ENCODE measurements at regions of chr22 and their contacts with region 1.

Region 1: GRCh38 chr22:40533712-40534378 is 102.7 kb downstream of the MRTFA start:
- DNase-seq: peak; percentile 47 to 70
- ATAC-seq: peak; percentile 67 to 72; a peak in 5 of 6 replicates
- H3K4me3 ChIP-seq: peak overlapping the region; percentile 45
- H3K27ac ChIP-seq: peak overlapping the region; percentile 81 to 85
- H3K4me1 ChIP-seq: peaks cover 47% of the 10 kb centered on the region
- CTCF ChIP-seq: no peak
- EP300 ChIP-seq: no peak
- POLR2A ChIP-seq: no peak
- RAD21 ChIP-seq: no peak

Region 2: DNA sequence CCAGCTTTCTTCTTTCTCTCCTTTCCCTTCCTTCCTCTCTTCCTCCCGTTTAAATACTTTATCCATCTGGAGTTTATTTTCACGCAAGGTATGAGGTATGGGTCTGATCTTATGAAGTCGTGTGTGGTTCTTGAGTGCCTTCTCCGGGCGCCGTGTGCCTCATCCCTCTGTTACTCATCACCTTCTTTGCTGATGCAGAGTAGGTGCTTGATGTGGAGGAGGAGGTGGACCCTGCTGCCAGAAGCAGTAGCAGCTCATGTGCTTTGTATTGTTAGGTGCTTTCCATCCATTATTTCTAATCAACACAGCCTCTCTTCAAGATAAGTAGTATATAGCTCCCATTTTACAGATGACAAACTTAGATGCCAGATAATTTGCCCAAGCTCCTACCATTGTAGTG is 309.1 kb before region 1 on chr22:
- CTCF ChIA-PET with region 1: no interaction called
- POLR2A ChIA-PET with region 1: no interaction called
- DNase-seq: no peak
- ATAC-seq: no peak
- H3K4me3 ChIP-seq: no peak overlapping the region
- H3K27ac ChIP-seq: no peak overlapping the region
- H3K4me1 ChIP-seq: peaks cover 9% of the 10 kb centered on the region; the same call in 1 of the 3 replicates
- CTCF ChIP-seq: no peak
- EP300 ChIP-seq: no peak
- POLR2A ChIP-seq: no peak
- RAD21 ChIP-seq: no peak

Region 3: GRCh38 chr22:40599731-40600130 is 65.9 kb after region 1 on chr22:
- CTCF ChIA-PET with region 1: no interaction called
- POLR2A ChIA-PET with region 1: interaction called, 11 read pairs
- DNase-seq: no peak
- ATAC-seq: no peak
- H3K4me3 ChIP-seq: no peak overlapping the region
- H3K27ac ChIP-seq: 0 out of 6 replicates have a peak overlapping the region, but pooled peaks of 1 of the 2 experiments have one; percentile 34
- H3K4me1 ChIP-seq: peaks cover 91% of the 10 kb centered on the region
- CTCF ChIP-seq: no peak
- EP300 ChIP-seq: no peak
- POLR2A ChIP-seq: no peak
- RAD21 ChIP-seq: no peak

Region 4: DNA sequence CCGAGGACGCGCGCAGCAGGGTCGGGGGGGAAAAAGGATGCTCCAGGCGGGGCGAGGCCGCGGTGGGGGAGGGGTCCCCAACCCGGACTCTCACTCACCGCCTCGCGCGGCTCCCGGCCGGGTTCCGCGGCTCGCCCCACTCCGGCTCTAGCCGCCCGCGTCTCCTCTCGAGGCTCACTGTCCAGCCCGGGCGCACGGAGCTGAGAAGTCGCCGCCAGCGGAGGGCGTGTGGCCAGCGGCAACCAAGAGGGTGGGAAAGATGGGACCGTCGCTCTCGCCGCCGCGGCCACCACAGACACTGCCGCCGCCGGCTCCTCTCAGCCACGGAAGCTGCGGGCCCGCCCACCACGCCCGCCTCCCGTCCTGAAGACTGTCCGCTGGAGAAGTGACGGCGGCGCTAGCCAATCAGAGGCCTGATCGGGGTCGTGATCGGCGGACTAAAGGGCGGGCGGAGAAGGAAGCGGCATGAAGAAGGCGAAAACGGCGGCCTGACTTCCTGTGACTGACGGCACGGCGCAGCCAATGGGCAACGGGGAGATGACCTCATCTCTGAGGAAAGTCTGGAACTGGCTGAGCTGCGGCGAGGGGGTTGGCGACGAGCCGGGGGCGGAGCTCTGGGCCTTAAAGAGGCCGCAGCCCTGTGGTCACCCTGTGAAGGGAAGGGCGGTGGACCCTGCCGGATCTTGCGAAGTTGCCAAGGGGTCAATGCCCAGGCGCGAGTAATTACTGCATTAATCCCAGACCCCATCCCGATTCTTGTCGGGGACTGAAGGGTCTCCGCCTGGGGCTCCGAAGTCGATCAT is 102.7 kb after region 1 on chr22 and contains the start of gene MRTFA:
- CTCF ChIA-PET with region 1: interaction called, 7 read pairs
- POLR2A ChIA-PET with region 1: interaction called, 10 read pairs
- DNase-seq: peak; percentile 76 to 99
- ATAC-seq: peak; percentile 97 to 98
- H3K4me3 ChIP-seq: peak within 1 kb of the TSS; percentile 98
- H3K27ac ChIP-seq: peak within 1 kb of the TSS; percentile 94 to 97
- H3K4me1 ChIP-seq: peaks cover 47% of the 10 kb centered on the region
- CTCF ChIP-seq: no peak
- EP300 ChIP-seq: no peak
- POLR2A ChIP-seq: peak; percentile 78
- RAD21 ChIP-seq: no peak; a peak in 1 of 5 replicates
- polyA plus RNA-seq, gene MRTFA: 6.8 and 12.8 TPM in 2 replicates

Region 5: DNA sequence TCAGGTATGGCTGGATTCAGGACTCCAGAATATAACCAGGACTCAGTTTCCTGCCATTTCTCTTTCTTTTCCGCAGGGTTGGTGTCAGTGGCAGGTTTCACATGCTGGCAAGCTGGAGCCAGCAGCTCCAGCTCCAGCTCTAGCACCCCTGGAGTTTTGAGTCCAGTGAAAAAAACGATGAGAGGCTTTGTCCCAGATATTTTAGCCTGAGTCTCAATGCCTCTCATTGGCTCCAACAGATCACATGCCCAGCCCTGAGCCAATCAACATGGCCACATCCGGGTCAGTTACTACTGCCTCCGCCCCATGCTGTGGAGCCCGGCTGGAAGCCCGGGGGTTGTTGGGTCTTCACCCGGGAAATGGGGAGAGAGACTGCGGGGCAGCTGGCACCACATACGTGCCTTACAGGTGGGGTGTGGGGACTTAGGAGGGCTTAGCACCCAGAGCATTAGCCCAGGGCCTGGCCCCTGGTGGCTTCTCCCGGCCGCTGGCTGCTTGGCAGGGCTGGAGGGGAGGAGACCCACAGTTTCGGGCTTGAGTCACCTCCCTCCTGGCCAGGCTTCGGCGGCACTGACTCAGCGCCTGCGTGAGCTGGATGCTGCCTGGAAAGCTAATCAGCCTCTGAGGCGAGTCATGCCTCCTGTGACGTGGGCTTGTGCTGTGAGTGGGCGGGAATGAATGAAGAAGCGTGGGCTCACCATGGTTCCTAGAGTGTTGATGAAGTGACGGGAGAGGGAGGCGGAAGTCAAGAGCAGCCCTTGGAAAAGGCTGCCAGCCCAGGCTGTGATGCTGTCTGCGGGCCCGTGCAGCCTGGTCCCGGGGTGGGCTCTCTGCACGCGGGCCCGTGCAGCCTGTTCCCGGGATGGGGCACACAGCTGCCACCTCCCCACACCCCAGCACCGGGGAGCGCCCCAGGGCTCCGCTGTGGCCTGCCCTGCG is 118.0 kb after region 1 on chr22:
- CTCF ChIA-PET with region 1: interaction called, 87 read pairs
- POLR2A ChIA-PET with region 1: interaction called, 15 read pairs
- DNase-seq: peak; percentile 91 to 95
- ATAC-seq: peak; percentile 97 to 98
- H3K4me3 ChIP-seq: peak overlapping the region; percentile 75
- H3K27ac ChIP-seq: peak overlapping the region; percentile 96 to 98
- H3K4me1 ChIP-seq: peaks cover 31% of the 10 kb centered on the region
- CTCF ChIP-seq: no peak
- EP300 ChIP-seq: no peak
- POLR2A ChIP-seq: peak; percentile 22
- RAD21 ChIP-seq: no peak